ENCODE measurements at regions of chr2 and their contacts with region 1.

Region 1: GRCh38 chr2:20543469-20544169 is 96.7 kb downstream of the RHOB start:
- DNase-seq: no peak
- ATAC-seq: no peak
- H3K4me3 ChIP-seq: no peak overlapping the region
- H3K4me3 Mint-ChIP-seq: no peak overlapping the region
- H3K27ac ChIP-seq: no peak overlapping the region
- H3K27ac Mint-ChIP-seq: no peak overlapping the region
- H3K4me1 ChIP-seq: no peaks in the 10 kb centered on the region
- H3K4me1 Mint-ChIP-seq: no peaks in the 10 kb centered on the region
- H3K27me3 ChIP-seq: peaks cover 0 to 31% of the 10 kb centered on the region in 2 experiments
- H3K27me3 Mint-ChIP-seq: peaks cover 0 to 4% of the 10 kb centered on the region in 2 donors

Region 2: DNA sequence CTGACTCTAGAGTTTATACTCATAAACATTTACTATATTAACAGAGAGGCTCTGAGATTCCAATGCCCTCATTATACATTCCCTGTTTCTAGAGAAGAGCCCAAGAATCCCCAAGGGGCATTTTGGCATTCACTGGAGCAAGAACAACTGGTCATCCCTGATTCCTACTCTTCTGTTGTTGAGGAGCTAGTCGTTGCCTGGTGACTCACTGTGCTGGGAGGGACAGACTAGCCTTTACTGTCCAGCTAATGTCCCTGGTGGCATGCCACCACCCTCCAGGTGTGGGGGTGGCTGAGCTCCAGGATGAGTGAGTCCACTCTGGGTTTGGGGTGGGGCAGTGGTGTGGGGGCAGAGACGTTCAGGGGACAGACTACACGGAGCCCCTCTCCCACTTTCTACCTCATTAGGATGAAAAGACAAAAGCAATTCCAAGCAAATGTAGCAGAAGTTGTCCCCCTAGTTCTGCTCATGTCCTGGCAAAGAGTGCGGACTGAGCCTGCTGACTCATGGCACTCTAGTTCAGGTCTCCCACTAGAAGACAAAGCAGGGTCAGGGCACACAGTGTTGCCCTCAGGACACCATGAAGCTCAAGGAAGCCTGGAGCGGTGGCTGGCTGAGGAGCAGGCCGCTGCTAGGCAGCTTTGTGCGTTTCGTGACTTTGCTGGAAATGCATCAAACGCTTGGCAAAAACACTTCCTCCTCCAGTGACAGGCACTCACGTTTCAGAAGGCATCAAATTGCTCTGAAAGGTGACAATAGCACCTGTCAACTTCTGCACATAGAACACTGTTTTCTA is 47.3 kb before region 1 on chr2:
- CTCF ChIA-PET with region 1: no interaction called
- POLR2A ChIA-PET with region 1: interaction called in 1 of 2 experiments, 12 read pairs
- DNase-seq: no peak
- ATAC-seq: no peak
- H3K4me3 ChIP-seq: no peak overlapping the region
- H3K4me3 Mint-ChIP-seq: no peak overlapping the region
- H3K27ac ChIP-seq: no peak overlapping the region
- H3K27ac Mint-ChIP-seq: no peak overlapping the region
- H3K4me1 ChIP-seq: no peaks in the 10 kb centered on the region
- H3K4me1 Mint-ChIP-seq: no peaks in the 10 kb centered on the region
- H3K27me3 ChIP-seq: peaks cover 0 to 20% of the 10 kb centered on the region in 2 experiments
- H3K27me3 Mint-ChIP-seq: peaks cover 5 to 6% of the 10 kb centered on the region in 2 donors